IMR-90 (cell line): ENCODE measurements at regions of chr19 and their contacts with region 1.

Region 1: GRCh38 chr19:43754503-43755255 is at the start of gene SMG9:
- DNase-seq: peak; percentile 97
- ATAC-seq: peak; percentile 85
- H3K4me3 ChIP-seq: peak within 1 kb of the TSS; percentile 66
- H3K27ac ChIP-seq: peak within 1 kb of the TSS; percentile 97
- H3K4me1 ChIP-seq: peaks cover 20% of the 10 kb centered on the region
- H3K27me3 ChIP-seq: no peaks in the 10 kb centered on the region
- CTCF ChIP-seq: no peak
- POLR2A ChIP-seq: peak; percentile 80
- RAD21 ChIP-seq: no peak
- total RNA-seq, gene SMG9: 4.8 and 5.8 TPM in 2 replicates

Region 2: GRCh38 chr19:43446746-43447489 is 307.8 kb before region 1 on chr19:
- CTCF ChIA-PET with region 1: no interaction called
- POLR2A ChIA-PET with region 1: no interaction called
- dilution Hi-C with region 1: no loop called
- in situ Hi-C with region 1: no loop called
- intact Hi-C with region 1: no loop called
- DNase-seq: peak; percentile 65
- ATAC-seq: peak; percentile 95
- H3K4me3 ChIP-seq: no peak overlapping the region
- H3K27ac ChIP-seq: no peak overlapping the region
- H3K4me1 ChIP-seq: 0 out of 2 replicates have a peak, but pooled peaks cover 2% of the 10 kb centered on the region
- H3K27me3 ChIP-seq: no peaks in the 10 kb centered on the region
- CTCF ChIP-seq: peak; percentile 94
- POLR2A ChIP-seq: no peak
- RAD21 ChIP-seq: peak; percentile 94

Region 3: GRCh38 chr19:43774103-43774939 is 19.6 kb after region 1 on chr19:
- CTCF ChIA-PET with region 1: interaction called, 4 read pairs
- POLR2A ChIA-PET with region 1: interaction called, 13 read pairs
- dilution Hi-C with region 1: no loop called
- in situ Hi-C with region 1: no loop called
- intact Hi-C with region 1: no loop called
- DNase-seq: peak; percentile 58
- ATAC-seq: peak; percentile 98
- H3K4me3 ChIP-seq: no peak overlapping the region
- H3K27ac ChIP-seq: no peak overlapping the region
- H3K4me1 ChIP-seq: peaks cover 3% of the 10 kb centered on the region
- H3K27me3 ChIP-seq: peaks cover 11% of the 10 kb centered on the region
- CTCF ChIP-seq: peak; percentile 96
- POLR2A ChIP-seq: no peak
- RAD21 ChIP-seq: peak; percentile 67